ENCODE measurements at regions of chr16 and their contacts with region 1.

Region 1: GRCh38 chr16:23452572-23453337 is at the start of gene COG7:
- DNase-seq: peak; percentile 93
- H3K4me3 ChIP-seq: peak within 1 kb of the TSS; percentile 60 to 87 (median 78)
- H3K27ac ChIP-seq: peak within 1 kb of the TSS; percentile 83 to 88 (median 86)
- H3K4me1 ChIP-seq: peaks cover 0 to 40% (median 24%) of the 10 kb centered on the region in 4 donors
- H3K27me3 ChIP-seq: no peaks in the 10 kb centered on the region
- CTCF ChIP-seq: no peak
- EP300 ChIP-seq: peak in 1 of 4 donors; percentile 24
- POLR2A ChIP-seq: no peak
- total RNA-seq, gene COG7: 12.0 to 25.5 (median 13.9) TPM

Region 2: DNA sequence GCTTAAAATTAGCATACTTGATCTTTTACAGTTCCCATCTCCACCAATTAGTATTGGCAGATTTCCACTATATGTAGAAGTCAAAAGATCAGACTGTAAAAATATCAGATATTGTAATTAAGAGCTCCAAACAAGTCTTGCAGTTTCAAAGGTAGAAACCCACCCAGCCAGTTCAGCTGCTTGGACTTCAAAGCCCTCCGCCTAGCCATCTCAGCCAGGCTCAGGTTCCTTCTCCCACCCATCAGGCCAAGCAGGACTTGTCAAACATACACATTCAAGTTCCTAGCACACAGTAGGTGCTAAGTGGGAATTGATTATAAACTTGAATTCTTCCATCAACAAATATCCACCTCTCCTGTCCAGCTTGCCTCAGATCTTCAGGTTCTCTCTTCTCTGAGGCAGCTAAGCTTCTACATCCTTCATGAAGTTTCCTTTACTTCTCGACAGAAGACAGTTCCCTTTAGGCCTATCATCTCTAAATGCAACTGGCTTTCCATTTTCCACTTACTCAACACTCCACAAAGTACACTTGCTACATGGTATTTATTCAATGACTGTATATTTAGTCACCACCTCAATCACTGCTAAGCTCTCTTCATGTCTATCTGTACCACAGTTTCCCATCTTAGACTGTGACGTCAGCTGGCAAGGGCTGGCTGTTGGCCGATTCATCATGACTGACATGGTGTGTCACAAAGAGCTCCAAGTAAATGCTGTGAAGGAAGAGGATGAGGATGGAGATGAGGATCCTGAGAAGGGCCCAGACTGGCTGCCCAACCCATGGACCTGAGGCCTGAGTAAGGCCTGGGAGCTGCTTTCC is 13.5 kb after region 1 on chr16:
- intact Hi-C with region 1: no loop called
- DNase-seq: no peak
- H3K4me3 ChIP-seq: no peak overlapping the region
- H3K27ac ChIP-seq: no peak overlapping the region
- H3K4me1 ChIP-seq: peaks cover 0 to 10% (median 6%) of the 10 kb centered on the region in 4 donors
- H3K27me3 ChIP-seq: no peaks in the 10 kb centered on the region
- CTCF ChIP-seq: no peak
- EP300 ChIP-seq: no peak
- POLR2A ChIP-seq: no peak

Region 3: DNA sequence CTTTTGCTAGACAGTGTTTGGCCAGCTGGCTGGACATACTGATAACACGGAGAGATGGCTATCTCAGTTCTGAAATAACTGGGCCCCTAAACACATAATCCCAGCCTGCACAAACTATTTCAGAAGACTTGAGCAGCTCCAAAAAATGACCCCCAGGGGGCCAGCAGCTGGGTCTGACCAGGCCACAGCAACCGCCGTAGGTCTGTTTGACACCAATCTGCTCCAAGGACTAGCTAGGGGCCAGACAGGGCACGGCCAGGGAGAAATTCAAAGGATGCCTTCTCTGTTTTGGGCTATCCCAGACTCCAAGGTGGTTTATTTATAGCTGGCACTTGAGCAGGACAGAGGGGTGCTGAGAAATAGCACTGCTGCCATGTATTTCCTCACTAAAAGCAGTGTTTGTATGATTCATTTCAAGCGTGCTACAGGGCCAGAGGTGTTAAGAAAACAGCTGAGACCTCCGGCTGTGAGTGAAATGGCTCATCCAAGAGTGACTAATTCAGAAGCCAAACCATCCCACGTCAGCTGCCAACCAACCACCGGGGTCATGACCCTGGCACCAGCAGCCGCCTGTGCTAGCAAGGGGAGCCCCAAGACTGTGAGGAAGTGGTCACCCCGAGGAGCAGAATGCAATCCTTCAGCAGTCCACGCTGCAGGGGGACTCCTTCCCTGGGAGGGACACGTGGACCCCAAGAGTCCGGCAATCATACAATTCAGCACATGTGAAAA is 51.9 kb after region 1 on chr16:
- intact Hi-C with region 1: loop called (anchors 5 kb)
- DNase-seq: peak; percentile 76
- H3K4me3 ChIP-seq: no peak overlapping the region
- H3K27ac ChIP-seq: peak overlapping the region; percentile 34 to 71 (median 60)
- H3K4me1 ChIP-seq: peaks cover 0 to 46% (median 40%) of the 10 kb centered on the region in 4 donors
- H3K27me3 ChIP-seq: no peaks in the 10 kb centered on the region
- CTCF ChIP-seq: no peak
- EP300 ChIP-seq: no peak
- POLR2A ChIP-seq: no peak